ENCODE measurements at regions of chr12 and their contacts with region 1.

Region 1: DNA sequence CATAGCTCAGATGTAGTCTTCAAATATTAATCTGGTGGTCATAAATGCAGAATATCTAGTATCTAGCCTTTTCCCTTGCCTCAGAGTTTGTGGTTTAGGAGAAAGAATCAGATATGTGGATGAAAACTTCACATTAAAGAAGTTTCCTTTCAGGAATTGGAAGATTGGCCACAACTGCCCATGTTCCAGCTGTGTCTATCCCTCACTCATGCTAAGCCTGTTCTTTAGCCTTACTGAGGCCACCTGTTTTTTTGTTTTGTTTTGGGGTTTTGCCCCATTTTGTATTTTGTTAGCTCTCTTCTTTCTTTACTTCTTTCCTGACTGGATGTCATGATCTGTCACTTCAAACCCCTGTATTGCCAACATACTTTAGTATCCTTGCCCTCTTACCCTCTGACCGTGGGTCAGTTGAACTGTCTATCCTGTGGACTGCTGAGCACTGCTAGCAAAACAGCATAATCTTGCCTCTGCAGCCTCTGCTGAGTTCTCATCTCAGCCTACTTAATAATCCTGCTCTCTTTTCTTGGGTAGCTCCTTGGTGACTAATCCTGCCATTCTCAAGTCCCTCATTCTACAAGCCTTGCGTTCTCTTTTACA is 22.0 kb upstream of the CCT2 start:
- DNase-seq: no peak
- ATAC-seq: no peak
- H3K4me3 ChIP-seq: no peak overlapping the region
- H3K4me3 Mint-ChIP-seq: no peak overlapping the region
- H3K27ac ChIP-seq: no peak overlapping the region
- H3K27ac Mint-ChIP-seq: no peak overlapping the region
- H3K4me1 ChIP-seq: no peaks in the 10 kb centered on the region
- H3K4me1 Mint-ChIP-seq: peaks cover 9% of the 10 kb centered on the region
- H3K27me3 ChIP-seq: no peaks in the 10 kb centered on the region
- H3K27me3 Mint-ChIP-seq: no peaks in the 10 kb centered on the region
- CTCF ChIP-seq: no peak

Region 2: DNA sequence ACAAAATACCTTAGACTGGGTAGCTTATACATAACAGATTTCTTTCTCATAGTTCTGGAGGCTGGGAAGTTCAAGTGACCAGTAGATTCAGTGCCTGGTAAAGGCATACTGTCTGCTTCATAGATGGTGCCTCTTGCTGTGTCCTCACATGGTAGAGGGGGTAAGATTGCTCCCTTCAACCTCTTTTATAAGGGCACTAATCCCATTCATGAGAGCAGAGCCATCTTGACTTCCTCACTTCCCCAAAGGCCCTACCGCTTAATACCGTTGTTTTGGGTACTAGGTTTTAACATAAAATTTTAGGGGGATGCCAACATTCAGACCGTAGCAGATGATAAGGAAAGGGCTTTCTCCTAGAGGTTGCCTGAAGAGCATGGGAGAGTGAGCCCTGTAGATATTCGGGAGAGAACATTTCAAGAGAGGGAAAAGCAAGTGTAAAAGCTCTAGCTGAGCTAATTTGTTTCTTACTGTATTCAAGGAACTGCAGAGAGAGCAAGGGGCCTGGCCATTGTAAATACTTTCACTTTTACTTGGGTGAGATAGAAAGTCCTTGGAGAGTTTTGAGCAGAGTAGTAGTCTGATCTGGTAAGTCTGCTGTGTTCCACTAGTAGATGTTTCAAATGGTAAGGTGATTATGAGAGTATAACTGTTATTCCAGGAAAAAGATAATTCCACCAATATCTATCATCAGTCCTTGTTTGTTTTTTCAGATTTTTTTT is 65.8 kb before region 1 on chr12:
- CTCF ChIA-PET with region 1: no interaction called
- POLR2A ChIA-PET with region 1: no interaction called
- intact Hi-C with region 1: loop called in 1 of 2 experiments (anchors 5 kb)
- DNase-seq: peak in 2 of 9 experiments; percentile 15 to 38
- ATAC-seq: peak; percentile 64
- H3K4me3 ChIP-seq: no peak overlapping the region
- H3K4me3 Mint-ChIP-seq: peak overlapping the region; percentile 55
- H3K27ac ChIP-seq: peak overlapping the region in 1 of 2 experiments; percentile 13
- H3K27ac Mint-ChIP-seq: peak overlapping the region; percentile 58
- H3K4me1 ChIP-seq: peaks cover 5% of the 10 kb centered on the region
- H3K4me1 Mint-ChIP-seq: peaks cover 57% of the 10 kb centered on the region
- H3K27me3 ChIP-seq: no peaks in the 10 kb centered on the region
- H3K27me3 Mint-ChIP-seq: no peaks in the 10 kb centered on the region
- CTCF ChIP-seq: no peak

Region 3: DNA sequence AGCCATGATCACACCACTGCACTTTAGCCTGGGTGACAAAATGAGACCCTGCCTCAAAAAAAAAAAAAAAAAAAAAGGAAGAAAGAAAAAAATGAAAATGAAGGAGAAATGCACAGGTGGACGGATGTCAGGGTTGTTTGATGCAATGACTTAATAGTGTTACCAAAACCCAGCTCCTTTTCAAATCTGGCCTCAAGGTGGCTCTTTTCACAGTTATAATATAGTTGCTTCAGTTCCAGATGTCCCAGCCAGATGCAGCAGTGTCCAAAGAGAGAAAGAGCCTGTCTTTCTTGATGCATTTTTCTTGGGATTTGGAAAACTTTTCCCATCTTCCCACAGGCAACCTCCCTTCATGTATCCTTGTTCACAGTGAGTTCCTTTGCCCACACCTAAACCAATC is 839.3 kb after region 1 on chr12:
- CTCF ChIA-PET with region 1: no interaction called
- POLR2A ChIA-PET with region 1: no interaction called
- intact Hi-C with region 1: no loop called
- DNase-seq: no peak
- ATAC-seq: no peak
- H3K4me3 ChIP-seq: no peak overlapping the region
- H3K4me3 Mint-ChIP-seq: no peak overlapping the region
- H3K27ac ChIP-seq: no peak overlapping the region
- H3K27ac Mint-ChIP-seq: no peak overlapping the region
- H3K4me1 ChIP-seq: no peaks in the 10 kb centered on the region
- H3K4me1 Mint-ChIP-seq: no peaks in the 10 kb centered on the region
- H3K27me3 ChIP-seq: no peaks in the 10 kb centered on the region
- H3K27me3 Mint-ChIP-seq: no peaks in the 10 kb centered on the region
- CTCF ChIP-seq: no peak